Esophagus squamous epithelium (tissue), 5 donors: ENCODE measurements at regions of chr5 and their contacts with region 1.

Region 1: GRCh38 chr5:138464008-138464387 is 1.3 kb upstream of the EGR1 start:
- DNase-seq: peak; percentile 59
- H3K4me3 ChIP-seq: peak overlapping the region; percentile 80 to 90 (median 85)
- H3K27ac ChIP-seq: peak overlapping the region; percentile 99
- H3K4me1 ChIP-seq: peaks cover 28 to 76% (median 37%) of the 10 kb centered on the region in 3 donors
- H3K27me3 ChIP-seq: no peaks in the 10 kb centered on the region
- CTCF ChIP-seq: peak; percentile 90 to 98 (median 96)
- POLR2A ChIP-seq: peak in 2 of 4 donors; percentile 75 to 79

Region 2: DNA sequence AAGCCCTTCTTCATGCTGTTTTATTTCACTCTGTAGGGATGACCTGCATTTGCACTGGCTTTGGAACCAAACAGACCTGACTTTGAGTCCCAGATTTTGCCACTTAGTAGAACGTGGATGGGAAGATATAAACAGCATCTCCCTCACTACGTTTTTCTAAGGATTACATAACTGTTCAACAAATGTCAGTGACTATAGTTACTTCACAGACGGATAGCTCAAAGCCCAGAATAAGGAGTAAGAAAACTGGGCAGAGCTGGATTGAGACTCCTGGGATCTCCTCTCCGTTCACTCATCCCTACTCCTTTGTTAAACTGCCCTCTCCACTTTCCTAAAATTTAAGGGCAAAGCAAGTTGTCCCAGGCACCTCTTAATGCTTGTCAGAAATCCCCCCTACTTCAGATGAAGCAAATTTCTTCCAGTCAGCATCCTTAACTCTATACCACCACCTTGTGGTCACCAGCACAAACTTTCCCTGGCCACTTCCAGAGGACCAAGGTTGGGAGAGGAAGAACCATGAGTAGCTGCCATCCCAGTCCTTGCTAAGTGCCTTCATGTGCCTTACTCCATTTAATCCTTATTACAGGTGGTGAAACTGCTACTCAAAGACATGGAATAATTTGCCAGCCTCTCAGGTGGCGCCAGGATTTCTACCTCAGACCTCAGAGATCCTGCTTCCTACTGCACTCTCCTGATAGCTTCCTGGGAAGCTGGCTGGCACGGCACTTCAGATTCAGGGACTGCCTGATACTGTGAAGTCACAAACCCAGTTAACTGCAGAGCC is 39.7 kb after region 1 on chr5:
- intact Hi-C with region 1: loop called (anchors 5 kb)
- DNase-seq: no peak
- H3K4me3 ChIP-seq: no peak overlapping the region
- H3K27ac ChIP-seq: peak overlapping the region in 3 of 4 donors; percentile 80 to 86 (median 85)
- H3K4me1 ChIP-seq: peaks cover 21 to 66% (median 45%) of the 10 kb centered on the region in 3 donors
- H3K27me3 ChIP-seq: no peaks in the 10 kb centered on the region
- CTCF ChIP-seq: peak; percentile 69 to 86 (median 82)
- POLR2A ChIP-seq: no peak

Region 3: GRCh38 chr5:138542956-138543729 is 79.1 kb after region 1 on chr5 and contains the start of gene ETF1:
- intact Hi-C with region 1: loop called (anchors 10 kb)
- DNase-seq: peak; percentile 98
- H3K4me3 ChIP-seq: peak within 1 kb of the TSS; percentile 80 to 99 (median 98)
- H3K27ac ChIP-seq: peak within 1 kb of the TSS; percentile 93 to 100 (median 98)
- H3K4me1 ChIP-seq: peaks cover 29 to 83% (median 45%) of the 10 kb centered on the region in 3 donors
- H3K27me3 ChIP-seq: no peaks in the 10 kb centered on the region
- CTCF ChIP-seq: peak in 2 of 6 experiments; percentile 16 to 32
- POLR2A ChIP-seq: peak; percentile 30 to 100 (median 99)
- total RNA-seq, gene ETF1: 65.2 to 132 (median 103) TPM

Region 4: DNA sequence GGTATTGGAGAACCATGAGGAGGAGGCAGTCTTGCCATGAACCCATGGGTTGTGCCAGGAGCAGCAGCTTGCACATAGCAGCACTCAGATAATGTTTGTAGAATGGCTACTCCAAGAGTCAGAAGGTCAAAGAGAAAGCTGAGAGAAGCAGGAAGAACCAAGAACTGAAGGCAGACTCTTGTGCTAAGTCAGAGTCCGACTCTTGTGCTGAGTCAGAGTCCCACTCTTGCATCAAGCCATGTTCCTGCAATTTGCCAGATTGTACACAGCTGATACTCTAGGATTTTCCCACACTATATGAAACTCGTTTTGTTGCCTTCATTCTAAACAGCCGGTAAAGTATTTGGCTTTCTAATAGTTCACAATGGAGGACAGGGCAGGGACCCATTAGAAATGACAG is 137.4 kb after region 1 on chr5:
- intact Hi-C with region 1: no loop called
- DNase-seq: no peak
- H3K4me3 ChIP-seq: no peak overlapping the region
- H3K27ac ChIP-seq: peak overlapping the region in 1 of 4 donors; percentile 25
- H3K4me1 ChIP-seq: peaks cover 0 to 36% (median 4%) of the 10 kb centered on the region in 3 donors
- H3K27me3 ChIP-seq: no peaks in the 10 kb centered on the region
- CTCF ChIP-seq: no peak
- POLR2A ChIP-seq: no peak